Mammary epithelial cell (primary cell): ENCODE measurements at regions of chr11 and their contacts with region 1.

Region 1: GRCh38 chr11:71525938-71526495 is 1.1 kb upstream of the KRTAP5-7 start:
- DNase-seq: no peak
- H3K4me3 ChIP-seq: no peak overlapping the region
- H3K27ac ChIP-seq: no peak overlapping the region
- H3K4me1 ChIP-seq: no peaks in the 10 kb centered on the region
- H3K27me3 ChIP-seq: peaks cover 2% of the 10 kb centered on the region
- CTCF ChIP-seq: no peak

Region 2: GRCh38 chr11:70871881-70872280 is 654.1 kb before region 1 on chr11:
- CTCF ChIA-PET with region 1: no interaction called
- dilution Hi-C with region 1: no loop called
- in situ Hi-C with region 1: no loop called
- intact Hi-C with region 1: no loop called
- DNase-seq: no peak
- H3K4me3 ChIP-seq: no peak overlapping the region
- H3K27ac ChIP-seq: no peak overlapping the region
- H3K4me1 ChIP-seq: no peaks in the 10 kb centered on the region
- H3K27me3 ChIP-seq: no peaks in the 10 kb centered on the region
- CTCF ChIP-seq: no peak

Region 3: GRCh38 chr11:71564430-71564829 is 38.4 kb after region 1 on chr11:
- CTCF ChIA-PET with region 1: no interaction called
- dilution Hi-C with region 1: no loop called
- in situ Hi-C with region 1: no loop called
- intact Hi-C with region 1: loop called (anchors 1 kb)
- DNase-seq: no peak
- H3K4me3 ChIP-seq: no peak overlapping the region
- H3K27ac ChIP-seq: no peak overlapping the region
- H3K4me1 ChIP-seq: no peaks in the 10 kb centered on the region
- H3K27me3 ChIP-seq: no peaks in the 10 kb centered on the region
- CTCF ChIP-seq: no peak